ENCODE measurements at regions of chr14 and their contacts with region 1.

Region 1: GRCh38 chr14:94971750-94972149 is 185.6 kb downstream of the DICER1 start:
- DNase-seq: peak in 1 of 2 donors; percentile 39
- ATAC-seq: peak in 7 of 8 donors; percentile 60 to 89 (median 77)
- H3K4me3 ChIP-seq: peak overlapping the region in 2 of 10 donors; percentile 5 to 26
- H3K27ac ChIP-seq: peak overlapping the region; percentile 8 to 79 (median 38)
- H3K4me1 ChIP-seq: peaks cover 0 to 15% (median 0%) of the 10 kb centered on the region in 9 donors
- H3K27me3 ChIP-seq: peaks cover 0 to 4% (median 0%) of the 10 kb centered on the region in 7 donors
- CTCF ChIP-seq: no peak

Region 2: GRCh38 chr14:94921882-94922585 is 49.7 kb before region 1 on chr14:
- intact Hi-C with region 1: loop called in 1 of 10 experiments (anchors 5 kb)
- DNase-seq: peak in 1 of 2 donors; percentile 36
- ATAC-seq: peak in 7 of 8 donors; percentile 52 to 86 (median 68)
- H3K4me3 ChIP-seq: no peak overlapping the region
- H3K27ac ChIP-seq: peak overlapping the region in 6 of 10 donors; percentile 31 to 76 (median 63)
- H3K4me1 ChIP-seq: peaks cover 0 to 20% (median 0%) of the 10 kb centered on the region in 9 donors
- H3K27me3 ChIP-seq: peaks cover 0 to 19% (median under 1%) of the 10 kb centered on the region in 7 donors
- CTCF ChIP-seq: no peak

Region 3: GRCh38 chr14:95092723-95093122 is 121.0 kb after region 1 on chr14:
- intact Hi-C with region 1: no loop called
- DNase-seq: no peak
- ATAC-seq: no peak
- H3K4me3 ChIP-seq: no peak overlapping the region
- H3K27ac ChIP-seq: no peak overlapping the region
- H3K4me1 ChIP-seq: peaks cover 0 to 15% (median 0%) of the 10 kb centered on the region in 9 donors
- H3K27me3 ChIP-seq: no peaks in the 10 kb centered on the region
- CTCF ChIP-seq: no peak

Region 4: DNA sequence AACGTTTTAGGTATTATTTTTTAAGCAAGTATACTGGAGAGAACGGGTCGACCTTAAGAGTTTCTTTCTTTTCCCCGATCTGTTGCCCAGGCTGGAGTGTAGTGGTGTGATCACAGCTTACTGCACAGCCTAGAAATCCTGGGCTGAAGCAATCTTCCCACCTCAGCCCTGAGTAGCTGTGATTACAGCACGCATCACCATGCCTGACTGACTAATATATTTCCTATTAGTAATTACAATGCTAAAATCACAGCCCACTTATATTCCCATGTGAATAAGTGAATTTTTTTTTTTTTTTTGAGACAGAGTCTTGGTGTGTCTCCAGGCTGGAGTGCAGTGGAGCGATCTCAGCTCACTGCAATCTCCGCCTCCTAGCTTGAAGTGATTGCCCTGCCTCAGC is 135.2 kb after region 1 on chr14:
- intact Hi-C with region 1: no loop called
- DNase-seq: no peak
- ATAC-seq: no peak
- H3K4me3 ChIP-seq: no peak overlapping the region
- H3K27ac ChIP-seq: no peak overlapping the region
- H3K4me1 ChIP-seq: no peaks in the 10 kb centered on the region
- H3K27me3 ChIP-seq: no peaks in the 10 kb centered on the region
- CTCF ChIP-seq: no peak